ENCODE measurements at regions of chr1 and their contacts with region 1.

Region 1: DNA sequence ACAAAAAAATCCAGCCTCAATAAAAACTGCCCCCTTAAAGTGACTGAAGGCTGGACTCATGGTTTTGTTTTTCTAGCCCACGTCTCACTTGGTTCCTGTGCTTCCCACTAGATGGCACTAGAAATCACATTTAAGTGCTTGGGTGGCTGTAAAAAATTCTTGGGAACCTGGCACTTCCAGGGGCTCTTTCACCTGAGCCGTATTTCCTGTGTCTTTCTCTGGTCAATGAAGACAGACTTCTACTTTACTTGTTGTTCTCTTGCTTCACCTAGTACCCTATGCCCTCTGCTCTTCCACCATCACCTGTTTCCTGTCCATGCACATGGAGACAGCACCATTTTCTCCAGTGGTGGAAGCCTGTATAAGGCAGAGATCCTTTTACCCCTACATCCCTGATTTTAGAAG is 20.0 kb downstream of the METTL13 start:
- H3K4me3 ChIP-seq: no peak overlapping the region
- H3K27ac ChIP-seq: no peak overlapping the region
- H3K4me1 ChIP-seq: no peaks in the 10 kb centered on the region
- CTCF ChIP-seq: peak; percentile 55; the same call in 1 of the 2 replicates

Region 2: GRCh38 chr1:171644805-171645483 is 156.5 kb before region 1 on chr1:
- CTCF ChIA-PET with region 1: interaction called, 28 read pairs
- POLR2A ChIA-PET with region 1: no interaction called
- H3K4me3 ChIP-seq: peak overlapping the region; percentile 3; the same call in 1 of the 2 replicates
- H3K27ac ChIP-seq: no peak overlapping the region
- H3K4me1 ChIP-seq: no peaks in the 10 kb centered on the region
- CTCF ChIP-seq: peak; percentile 88

Region 3: GRCh38 chr1:171841050-171841940 is 39.8 kb after region 1 on chr1 and contains the start of gene DNM3:
- CTCF ChIA-PET with region 1: interaction called, 15 read pairs
- POLR2A ChIA-PET with region 1: interaction called, 13 read pairs
- H3K4me3 ChIP-seq: peak within 1 kb of the TSS; percentile 95
- H3K27ac ChIP-seq: peak within 1 kb of the TSS; percentile 43; the same call in 1 of the 2 replicates
- H3K4me1 ChIP-seq: no peaks in the 10 kb centered on the region
- CTCF ChIP-seq: no peak; the same call in 1 of the 2 replicates

Region 4: GRCh38 chr1:171965777-171966176 is 164.3 kb after region 1 on chr1:
- CTCF ChIA-PET with region 1: interaction called, 18 read pairs
- POLR2A ChIA-PET with region 1: no interaction called
- H3K4me3 ChIP-seq: no peak overlapping the region
- H3K27ac ChIP-seq: no peak overlapping the region
- H3K4me1 ChIP-seq: no peaks in the 10 kb centered on the region; the same call in 1 of the 2 replicates
- CTCF ChIP-seq: no peak

Region 5: DNA sequence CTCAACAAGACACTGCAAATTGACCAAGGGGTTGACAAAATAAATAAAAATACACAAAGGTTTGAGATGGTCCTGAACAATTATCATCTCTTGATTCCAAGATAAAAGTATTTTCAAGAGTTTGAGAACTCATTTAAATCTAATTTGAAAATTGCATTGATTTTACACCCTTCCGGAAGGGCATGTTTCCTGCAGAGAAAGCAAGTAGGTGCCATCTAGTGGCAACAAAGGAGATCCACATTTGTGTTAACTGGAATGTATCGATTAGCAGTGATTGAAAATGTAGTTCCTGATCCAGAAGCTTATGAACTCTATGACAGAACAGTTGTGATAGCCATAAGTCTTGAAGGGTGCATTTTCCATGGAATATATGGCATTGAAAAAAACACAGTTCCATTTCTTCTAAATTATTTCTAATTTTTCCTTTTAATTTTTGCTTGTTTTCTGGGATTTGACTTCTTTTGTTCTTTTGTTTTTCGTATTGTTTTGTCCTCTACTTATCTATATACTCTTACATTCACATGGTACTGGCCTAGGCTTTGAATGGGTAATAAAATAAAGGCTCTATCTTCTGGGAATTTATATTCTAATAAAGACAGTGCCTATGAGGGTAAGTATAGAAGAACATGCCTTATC is 183.5 kb after region 1 on chr1:
- CTCF ChIA-PET with region 1: interaction called, 378 read pairs
- POLR2A ChIA-PET with region 1: interaction called, 3 read pairs
- H3K4me3 ChIP-seq: no peak overlapping the region
- H3K27ac ChIP-seq: no peak overlapping the region
- H3K4me1 ChIP-seq: no peaks in the 10 kb centered on the region
- CTCF ChIP-seq: no peak

Region 6: DNA sequence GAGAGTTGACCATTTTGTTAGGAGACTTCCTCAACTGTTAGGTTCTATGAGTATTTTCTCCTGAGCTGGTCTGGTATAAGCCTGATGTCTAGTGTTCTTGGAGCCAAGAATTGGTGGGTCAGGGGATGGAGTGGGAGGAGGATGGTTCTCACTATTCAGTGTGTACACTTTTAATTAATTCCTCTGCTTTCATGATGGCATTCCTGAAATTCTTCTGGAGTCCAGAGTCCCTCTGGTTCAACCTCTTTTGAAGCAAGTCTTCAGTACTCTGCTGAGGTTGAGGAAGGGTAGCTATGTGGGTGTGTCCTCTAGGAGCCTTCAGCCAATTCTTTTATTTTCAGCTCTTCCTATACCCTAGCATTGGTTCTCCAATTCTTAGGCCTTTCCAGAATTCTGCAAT is 188.9 kb after region 1 on chr1:
- CTCF ChIA-PET with region 1: interaction called, 378 read pairs
- POLR2A ChIA-PET with region 1: no interaction called
- H3K4me3 ChIP-seq: no peak overlapping the region
- H3K27ac ChIP-seq: no peak overlapping the region
- H3K4me1 ChIP-seq: no peaks in the 10 kb centered on the region
- CTCF ChIP-seq: no peak

Region 7: DNA sequence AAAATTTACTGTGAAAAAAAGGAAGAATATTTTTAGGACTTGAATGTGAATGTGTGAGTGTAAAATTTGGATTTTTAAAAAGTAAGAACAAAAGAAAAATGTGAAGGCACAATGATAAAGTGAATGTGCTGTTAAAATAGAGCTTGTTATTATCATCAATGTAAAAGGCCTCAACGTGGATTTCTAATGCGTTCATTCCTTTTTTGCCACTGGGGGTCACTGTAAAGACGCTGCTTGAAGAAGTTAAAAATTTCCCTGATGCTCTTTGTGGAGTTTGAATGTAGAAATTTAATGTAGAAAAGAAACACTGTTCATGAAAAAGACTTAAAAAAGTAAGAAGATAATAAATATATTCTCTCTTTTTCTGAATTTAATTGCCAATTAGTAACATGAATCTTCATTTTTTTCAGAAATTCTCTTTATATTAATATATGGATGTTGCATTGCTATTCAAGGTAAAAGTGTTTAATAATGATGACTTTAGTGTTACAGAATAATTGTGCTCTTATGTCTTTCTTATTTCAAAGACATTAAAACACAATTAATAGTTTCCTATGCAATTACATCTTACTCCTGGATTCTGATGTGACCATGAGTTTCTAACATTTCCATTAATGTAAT is 201.3 kb after region 1 on chr1:
- CTCF ChIA-PET with region 1: interaction called, 13 read pairs
- POLR2A ChIA-PET with region 1: no interaction called
- H3K4me3 ChIP-seq: no peak overlapping the region
- H3K27ac ChIP-seq: no peak overlapping the region
- H3K4me1 ChIP-seq: no peaks in the 10 kb centered on the region
- CTCF ChIP-seq: no peak

Measured in HEK293 (cell line).